Esophagus muscularis mucosa (tissue), 4 donors: ENCODE measurements at regions of chr1 and their contacts with region 1.

Region 1: DNA sequence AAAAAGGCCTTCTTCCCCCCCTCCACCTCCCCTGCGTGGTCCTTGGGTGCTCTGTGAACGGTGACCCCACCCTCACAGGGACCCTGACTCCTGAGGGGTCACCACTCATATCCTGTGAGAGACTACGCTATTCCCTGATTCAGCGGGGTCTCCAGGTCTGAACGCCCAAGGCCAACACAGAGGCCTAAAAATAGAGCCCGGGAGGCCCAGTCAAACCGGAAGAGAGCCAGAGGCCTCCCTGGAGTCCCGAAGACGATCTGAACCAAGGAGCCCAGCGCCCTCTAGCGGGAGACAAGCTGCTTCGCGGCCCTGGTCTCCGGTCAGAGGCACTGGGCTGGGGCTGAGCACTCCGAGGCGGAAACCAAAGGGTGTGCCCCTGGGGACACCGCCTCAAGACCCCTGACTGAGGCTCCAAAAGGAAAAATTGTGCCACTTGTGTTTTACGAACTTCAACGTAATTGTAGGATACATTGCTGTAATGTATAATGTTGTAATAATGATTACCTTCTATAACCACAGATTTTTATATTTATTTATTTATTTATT is 42.4 kb upstream of the PSEN2 start:
- DNase-seq: peak; percentile 97
- H3K4me3 ChIP-seq: peak overlapping the region; percentile 25 to 35 (median 32)
- H3K27ac ChIP-seq: peak overlapping the region; percentile 84 to 90 (median 87)
- H3K4me1 ChIP-seq: peaks cover 17 to 22% (median 20%) of the 10 kb centered on the region in 4 donors
- H3K27me3 ChIP-seq: no peaks in the 10 kb centered on the region
- CTCF ChIP-seq: peak; percentile 97 to 98 (median 97)
- EP300 ChIP-seq: no peak
- POLR2A ChIP-seq: no peak

Region 2: GRCh38 chr1:226634166-226634588 is 193.9 kb before region 1 on chr1:
- intact Hi-C with region 1: loop called (anchors 2 kb)
- DNase-seq: no peak
- H3K4me3 ChIP-seq: no peak overlapping the region
- H3K27ac ChIP-seq: peak overlapping the region in 2 of 4 donors; percentile 74 to 83
- H3K4me1 ChIP-seq: peaks cover 40 to 84% (median 76%) of the 10 kb centered on the region in 4 donors
- H3K27me3 ChIP-seq: no peaks in the 10 kb centered on the region
- CTCF ChIP-seq: peak in 2 of 3 experiments; percentile 96
- EP300 ChIP-seq: no peak
- POLR2A ChIP-seq: no peak